ENCODE measurements at regions of chr2 and their contacts with region 1.

Region 1: DNA sequence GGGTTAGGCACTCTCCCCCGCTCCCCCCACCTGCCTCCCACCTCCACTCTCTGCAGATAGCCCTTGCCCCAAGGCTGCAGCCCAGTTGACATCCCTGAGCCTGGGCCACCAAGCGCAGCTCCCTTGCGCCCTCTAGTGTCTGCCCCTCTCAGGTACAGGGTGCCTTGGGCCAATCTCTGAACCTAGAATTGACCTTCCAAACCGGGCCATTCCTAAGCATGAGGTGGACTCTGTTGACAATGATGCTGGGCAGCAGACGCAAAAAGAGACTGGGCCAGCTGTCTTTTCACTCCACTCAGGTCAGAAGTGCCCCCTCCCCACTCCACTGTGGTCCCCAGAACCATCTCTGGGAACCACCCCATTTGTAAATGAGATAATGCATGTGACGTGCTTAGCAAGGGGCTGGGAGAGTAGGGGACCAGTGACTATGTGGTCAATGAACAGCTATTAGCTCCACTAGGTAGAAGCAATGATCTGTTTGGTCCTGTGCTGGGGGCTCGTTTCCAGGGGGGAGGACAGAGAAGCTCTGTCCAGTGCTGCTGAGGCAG is 43.3 kb upstream of the PLB1 start:
- DNase-seq: peak; percentile 85
- H3K4me3 ChIP-seq: no peak overlapping the region
- H3K27ac ChIP-seq: no peak overlapping the region
- H3K4me1 ChIP-seq: no peaks in the 10 kb centered on the region
- H3K27me3 ChIP-seq: no peaks in the 10 kb centered on the region
- CTCF ChIP-seq: peak; percentile 88

Region 2: GRCh38 chr2:27703638-27704341 is 748.8 kb before region 1 on chr2:
- intact Hi-C with region 1: loop called (anchors 5 kb)
- DNase-seq: peak; percentile 89
- H3K4me3 ChIP-seq: no peak overlapping the region
- H3K27ac ChIP-seq: no peak overlapping the region
- H3K4me1 ChIP-seq: no peaks in the 10 kb centered on the region
- H3K27me3 ChIP-seq: no peaks in the 10 kb centered on the region
- CTCF ChIP-seq: peak; percentile 89

Region 3: GRCh38 chr2:27754138-27754588 is 698.4 kb before region 1 on chr2:
- intact Hi-C with region 1: loop called (anchors 5 kb)
- DNase-seq: peak; percentile 90
- H3K4me3 ChIP-seq: no peak overlapping the region
- H3K27ac ChIP-seq: no peak overlapping the region
- H3K4me1 ChIP-seq: no peaks in the 10 kb centered on the region
- H3K27me3 ChIP-seq: no peaks in the 10 kb centered on the region
- CTCF ChIP-seq: peak; percentile 88

Region 4: GRCh38 chr2:28510184-28510583 is 57.6 kb after region 1 on chr2:
- intact Hi-C with region 1: no loop called
- DNase-seq: no peak
- H3K4me3 ChIP-seq: no peak overlapping the region
- H3K27ac ChIP-seq: no peak overlapping the region
- H3K4me1 ChIP-seq: no peaks in the 10 kb centered on the region
- H3K27me3 ChIP-seq: no peaks in the 10 kb centered on the region
- CTCF ChIP-seq: no peak

Region 5: GRCh38 chr2:28527196-28527595 is 74.6 kb after region 1 on chr2:
- intact Hi-C with region 1: no loop called
- DNase-seq: no peak
- H3K4me3 ChIP-seq: no peak overlapping the region
- H3K27ac ChIP-seq: no peak overlapping the region
- H3K4me1 ChIP-seq: no peaks in the 10 kb centered on the region
- H3K27me3 ChIP-seq: no peaks in the 10 kb centered on the region
- CTCF ChIP-seq: no peak

Region 6: DNA sequence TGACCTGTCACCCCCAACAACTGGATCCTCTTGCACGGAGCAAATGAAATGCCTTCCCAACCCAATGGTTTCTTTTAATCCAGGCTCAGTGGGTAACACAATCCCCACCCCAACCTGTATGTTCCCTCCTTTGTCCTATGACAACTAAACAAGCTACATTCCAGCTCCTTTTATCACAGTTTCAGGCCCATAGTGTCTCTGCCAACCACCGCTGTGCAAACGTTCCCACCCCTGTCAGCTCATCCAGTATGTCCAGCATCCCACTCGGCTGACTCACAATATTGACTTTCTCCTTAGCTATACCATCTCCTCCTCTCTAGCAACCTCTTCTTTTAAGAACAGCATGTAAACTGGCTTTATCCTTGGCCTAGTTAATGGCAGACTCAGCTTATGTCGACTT is 181.1 kb after region 1 on chr2:
- intact Hi-C with region 1: no loop called
- DNase-seq: no peak
- H3K4me3 ChIP-seq: no peak overlapping the region
- H3K27ac ChIP-seq: no peak overlapping the region
- H3K4me1 ChIP-seq: no peaks in the 10 kb centered on the region
- H3K27me3 ChIP-seq: no peaks in the 10 kb centered on the region
- CTCF ChIP-seq: no peak

Measured in colonic mucosa (tissue), 4 donors.